ENCODE measurements at regions of chr6 and their contacts with region 1.

Region 1: GRCh38 chr6:43608310-43608763 is 20.7 kb downstream of the GTPBP2 start:
- DNase-seq: peak; percentile 82
- H3K4me3 ChIP-seq: no peak overlapping the region
- H3K27ac ChIP-seq: no peak overlapping the region
- H3K4me1 ChIP-seq: peaks cover 2% of the 10 kb centered on the region
- H3K27me3 ChIP-seq: no peaks in the 10 kb centered on the region
- CTCF ChIP-seq: peak; percentile 84 to 89
- POLR2A ChIP-seq: no peak

Region 2: DNA sequence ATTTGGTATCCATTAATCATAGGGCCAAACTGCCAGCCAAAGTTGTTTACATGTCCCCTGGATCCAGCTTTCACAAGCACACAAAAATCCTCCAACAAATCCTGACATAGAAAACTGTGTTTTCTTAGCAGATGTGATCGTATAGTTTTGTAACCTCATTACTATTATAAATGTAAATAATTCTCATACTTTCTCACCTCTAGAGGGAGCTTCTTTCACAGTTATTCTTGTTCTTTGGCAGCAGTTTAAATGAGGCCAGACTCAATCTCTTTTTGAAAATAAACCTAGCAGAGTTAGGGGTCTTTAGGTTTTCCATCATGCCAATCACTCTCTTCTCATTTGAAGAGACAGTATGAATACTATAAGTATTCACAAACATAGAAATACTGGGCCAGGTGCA is 221.8 kb before region 1 on chr6:
- CTCF ChIA-PET with region 1: no interaction called
- POLR2A ChIA-PET with region 1: no interaction called
- dilution Hi-C with region 1: no loop called
- intact Hi-C with region 1: no loop called
- DNase-seq: peak; percentile 35
- H3K4me3 ChIP-seq: no peak overlapping the region
- H3K27ac ChIP-seq: no peak overlapping the region
- H3K4me1 ChIP-seq: peaks cover 8% of the 10 kb centered on the region
- H3K27me3 ChIP-seq: peaks cover 0 to 2% of the 10 kb centered on the region in 2 experiments
- CTCF ChIP-seq: peak in 1 of 2 donors; percentile 30
- POLR2A ChIP-seq: no peak

Region 3: DNA sequence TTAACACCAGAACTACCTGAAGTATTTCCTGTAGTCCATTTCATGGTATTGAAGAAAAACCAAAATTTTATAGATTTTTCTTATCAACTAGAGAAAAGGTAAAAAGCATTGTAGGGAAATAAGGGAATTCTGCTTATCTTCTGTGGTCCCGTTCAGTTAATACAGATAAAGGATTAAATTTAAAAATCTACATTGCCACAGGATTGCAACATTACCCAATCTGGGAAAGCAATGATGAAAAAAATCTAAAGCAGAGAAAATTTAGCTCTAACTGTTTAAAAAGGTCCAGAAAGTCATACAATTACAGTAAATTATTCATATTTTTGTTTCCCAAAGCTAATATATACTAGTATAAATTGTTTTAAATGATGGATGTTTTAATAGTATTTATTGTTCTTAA is 14.4 kb before region 1 on chr6:
- CTCF ChIA-PET with region 1: interaction called, 13 read pairs
- POLR2A ChIA-PET with region 1: no interaction called
- dilution Hi-C with region 1: no loop called
- intact Hi-C with region 1: no loop called
- DNase-seq: no peak
- H3K4me3 ChIP-seq: no peak overlapping the region
- H3K27ac ChIP-seq: no peak overlapping the region
- H3K4me1 ChIP-seq: no peaks in the 10 kb centered on the region
- H3K27me3 ChIP-seq: no peaks in the 10 kb centered on the region
- CTCF ChIP-seq: no peak
- POLR2A ChIP-seq: no peak

Region 4: DNA sequence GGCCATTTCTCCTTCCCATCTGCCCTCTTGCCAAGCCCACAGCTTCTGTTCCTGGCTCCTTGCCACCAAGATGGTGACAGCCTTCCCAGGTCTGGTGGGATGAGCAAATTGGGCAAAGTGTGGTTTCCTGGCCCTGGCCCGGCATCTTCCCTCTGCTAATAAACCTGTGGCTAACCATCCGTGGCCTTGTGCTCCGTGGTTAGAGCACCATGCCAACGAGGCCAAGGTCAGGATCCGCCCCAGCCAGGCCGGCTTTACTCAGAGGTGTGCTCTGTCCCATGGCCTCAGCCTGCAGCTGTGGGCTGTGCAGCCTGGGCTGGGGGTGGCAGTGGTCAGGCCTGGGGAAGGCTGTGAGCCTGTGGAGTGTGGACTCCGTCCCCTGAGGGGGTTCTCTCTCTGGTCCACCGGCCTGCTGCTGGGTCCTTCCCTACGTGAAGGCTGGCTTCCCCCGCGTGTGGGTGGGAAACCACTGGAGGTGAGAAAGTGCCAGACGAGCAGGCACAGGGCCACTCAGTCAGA is 279.1 kb after region 1 on chr6:
- CTCF ChIA-PET with region 1: no interaction called
- POLR2A ChIA-PET with region 1: no interaction called
- dilution Hi-C with region 1: no loop called
- intact Hi-C with region 1: no loop called
- DNase-seq: no peak
- H3K4me3 ChIP-seq: no peak overlapping the region
- H3K27ac ChIP-seq: no peak overlapping the region
- H3K4me1 ChIP-seq: no peaks in the 10 kb centered on the region
- H3K27me3 ChIP-seq: peaks cover 9 to 17% of the 10 kb centered on the region in 2 experiments
- CTCF ChIP-seq: no peak
- POLR2A ChIP-seq: no peak

Measured in endothelial cell of umbilical vein (primary cell).